Mammary epithelial cell (primary cell): ENCODE measurements at regions of chr1 and their contacts with region 1.

Region 1: GRCh38 chr1:110347182-110347893 is 8.2 kb downstream of the RBM15 start:
- DNase-seq: no peak
- H3K4me3 ChIP-seq: no peak overlapping the region
- H3K27ac ChIP-seq: no peak overlapping the region
- H3K4me1 ChIP-seq: peaks cover 16% of the 10 kb centered on the region
- H3K27me3 ChIP-seq: no peaks in the 10 kb centered on the region
- CTCF ChIP-seq: no peak

Region 2: DNA sequence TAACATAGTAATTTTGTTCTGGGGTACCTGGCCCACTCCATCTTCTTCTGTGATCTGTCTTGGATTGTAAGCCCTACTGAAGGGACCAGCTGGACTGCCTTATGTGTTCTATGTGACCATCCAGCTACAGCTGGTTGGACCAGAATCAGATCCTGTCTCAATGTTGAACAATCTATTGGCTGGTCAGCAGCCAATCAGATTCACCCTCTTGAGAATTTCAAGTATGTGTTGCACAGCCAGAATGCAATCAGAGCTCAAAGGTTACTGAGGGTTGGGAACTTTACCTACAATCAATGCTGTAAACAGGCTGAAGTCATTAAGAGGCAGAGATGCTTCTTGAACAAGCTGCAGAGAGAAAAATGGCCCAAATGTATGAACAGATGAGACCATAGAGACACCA is 75.3 kb before region 1 on chr1:
- CTCF ChIA-PET with region 1: no interaction called
- dilution Hi-C with region 1: loop called (anchors 5 kb)
- in situ Hi-C with region 1: no loop called
- intact Hi-C with region 1: no loop called
- DNase-seq: no peak
- H3K4me3 ChIP-seq: no peak overlapping the region
- H3K27ac ChIP-seq: no peak overlapping the region
- H3K4me1 ChIP-seq: no peaks in the 10 kb centered on the region
- H3K27me3 ChIP-seq: peaks cover 3% of the 10 kb centered on the region
- CTCF ChIP-seq: no peak

Region 3: DNA sequence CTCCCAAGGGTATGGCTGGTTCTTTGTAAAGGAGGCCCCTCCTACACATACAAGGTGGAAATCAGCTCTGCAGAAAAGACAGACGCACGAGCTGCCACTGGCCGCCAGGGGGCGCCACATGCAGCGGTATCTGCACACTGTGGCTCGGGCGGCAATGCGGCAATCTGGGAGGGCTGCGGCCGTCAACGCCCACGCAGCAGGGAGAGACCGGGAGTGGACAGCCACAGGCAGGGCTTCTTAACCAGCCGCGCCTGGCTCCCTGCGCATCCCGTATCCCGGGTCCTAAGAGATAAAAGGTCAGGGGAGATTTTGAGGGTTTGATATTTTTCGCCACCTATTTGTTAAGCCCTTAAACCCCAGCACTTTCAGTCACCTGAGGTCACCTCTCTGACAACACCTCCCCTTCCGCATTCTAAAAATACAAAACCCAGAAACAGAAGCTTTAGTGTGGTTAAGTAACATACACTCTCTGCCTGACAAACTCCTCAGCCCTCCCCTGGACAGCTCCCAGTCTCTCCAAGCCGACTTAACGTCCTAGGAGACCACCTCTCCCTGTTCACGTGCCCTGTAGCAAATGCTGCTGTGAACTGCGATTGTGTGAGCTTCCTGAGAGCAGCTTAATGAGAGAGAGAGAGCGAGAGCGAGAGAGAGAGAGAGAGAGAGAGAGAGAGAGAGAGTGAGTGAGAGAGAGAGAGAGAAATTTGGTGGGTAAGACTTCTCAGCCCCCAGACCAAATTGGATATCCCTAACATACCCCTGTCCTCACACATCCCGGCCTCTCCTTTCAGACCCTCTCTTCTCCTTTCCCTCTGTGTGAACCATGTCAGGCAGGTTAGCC is 272.3 kb after region 1 on chr1:
- CTCF ChIA-PET with region 1: no interaction called
- dilution Hi-C with region 1: no loop called
- in situ Hi-C with region 1: no loop called
- intact Hi-C with region 1: no loop called
- DNase-seq: peak; percentile 71
- H3K4me3 ChIP-seq: no peak overlapping the region
- H3K27ac ChIP-seq: no peak overlapping the region
- H3K4me1 ChIP-seq: peaks cover 4% of the 10 kb centered on the region
- H3K27me3 ChIP-seq: no peaks in the 10 kb centered on the region
- CTCF ChIP-seq: peak; percentile 89 to 95